Tibial artery (tissue), 4 donors: ENCODE measurements at regions of chrX and their contacts with region 1.

Region 1: DNA sequence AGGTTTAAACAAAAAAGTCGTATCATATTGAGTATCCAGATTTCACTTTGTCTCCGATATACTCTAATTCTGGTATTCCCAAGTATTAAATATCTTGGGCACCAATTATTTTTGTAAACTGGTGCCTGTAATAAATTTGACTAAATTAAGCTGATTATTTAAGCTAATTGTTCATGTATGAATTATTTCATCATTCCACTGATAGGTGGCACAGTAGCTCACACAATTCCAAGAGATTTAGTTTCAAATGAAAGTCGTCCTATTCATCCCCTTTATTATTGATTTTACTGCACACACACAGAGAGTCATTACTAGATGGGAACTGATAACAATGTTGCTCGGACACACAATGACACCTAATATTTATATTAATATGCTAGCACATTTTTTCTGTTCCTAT is 432.4 kb downstream of the DMD start:
- DNase-seq: no peak
- H3K4me3 ChIP-seq: no peak overlapping the region
- H3K27ac ChIP-seq: no peak overlapping the region
- H3K4me1 ChIP-seq: no peaks in the 10 kb centered on the region
- H3K27me3 ChIP-seq: no peaks in the 10 kb centered on the region
- CTCF ChIP-seq: no peak

Region 2: DNA sequence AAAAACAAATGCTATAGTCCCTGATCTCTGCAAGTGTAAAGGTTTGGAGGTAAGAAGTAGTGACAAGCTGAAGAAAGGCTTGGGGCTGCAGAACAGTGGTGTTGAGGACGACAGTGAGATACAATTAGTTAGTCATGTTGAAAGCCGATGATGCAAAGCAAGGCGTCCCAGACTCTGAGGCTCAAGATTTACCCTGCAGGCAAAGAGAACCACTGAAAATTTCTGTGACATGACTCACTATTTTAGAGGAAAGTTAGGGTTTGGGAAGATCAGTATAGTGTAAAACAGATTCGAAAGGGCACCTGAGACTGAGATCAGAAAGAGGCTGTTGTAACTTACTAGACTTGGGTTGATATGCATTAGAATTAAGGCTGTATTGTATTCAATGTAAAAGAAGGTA is 1425.9 kb before region 1 on chrX:
- intact Hi-C with region 1: loop called (anchors 5 kb)
- DNase-seq: no peak
- H3K4me3 ChIP-seq: no peak overlapping the region
- H3K27ac ChIP-seq: no peak overlapping the region
- H3K4me1 ChIP-seq: peaks cover 0 to 12% (median 0%) of the 10 kb centered on the region in 4 donors
- H3K27me3 ChIP-seq: no peaks in the 10 kb centered on the region
- CTCF ChIP-seq: no peak

Region 3: GRCh38 chrX:31921236-31921635 is 857.7 kb before region 1 on chrX:
- intact Hi-C with region 1: no loop called
- DNase-seq: no peak
- H3K4me3 ChIP-seq: no peak overlapping the region
- H3K27ac ChIP-seq: no peak overlapping the region
- H3K4me1 ChIP-seq: no peaks in the 10 kb centered on the region
- H3K27me3 ChIP-seq: no peaks in the 10 kb centered on the region
- CTCF ChIP-seq: no peak